ENCODE measurements at regions of chr20 and their contacts with region 1.

Region 1: DNA sequence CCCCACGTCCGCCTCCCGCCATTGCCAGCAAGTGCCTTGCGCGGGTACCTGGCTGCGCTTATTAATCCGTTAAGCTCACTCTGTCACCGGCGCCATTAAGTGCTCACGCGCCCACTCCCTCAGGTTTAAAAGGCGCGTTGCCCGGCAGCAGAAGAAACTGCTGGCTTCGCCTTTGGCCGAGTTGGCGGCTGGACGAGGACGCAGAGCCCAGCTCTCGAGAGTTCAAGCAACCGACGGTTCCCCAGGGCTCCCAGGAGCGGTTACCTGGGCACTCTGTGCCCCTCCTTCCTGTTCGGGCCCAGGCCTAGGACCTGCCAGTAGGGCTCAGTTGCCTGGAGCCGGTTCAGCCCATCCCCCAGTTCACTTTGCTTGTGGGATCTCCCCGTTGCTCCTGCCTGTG is at the start of gene GGTLC1:
- DNase-seq: no peak
- H3K4me3 ChIP-seq: no peak within 1 kb of the TSS
- H3K27ac ChIP-seq: no peak within 1 kb of the TSS
- H3K4me1 ChIP-seq: no peaks in the 10 kb centered on the region
- CTCF ChIP-seq: no peak
- total RNA-seq, gene GGTLC1: not detected in 2 replicates

Region 2: DNA sequence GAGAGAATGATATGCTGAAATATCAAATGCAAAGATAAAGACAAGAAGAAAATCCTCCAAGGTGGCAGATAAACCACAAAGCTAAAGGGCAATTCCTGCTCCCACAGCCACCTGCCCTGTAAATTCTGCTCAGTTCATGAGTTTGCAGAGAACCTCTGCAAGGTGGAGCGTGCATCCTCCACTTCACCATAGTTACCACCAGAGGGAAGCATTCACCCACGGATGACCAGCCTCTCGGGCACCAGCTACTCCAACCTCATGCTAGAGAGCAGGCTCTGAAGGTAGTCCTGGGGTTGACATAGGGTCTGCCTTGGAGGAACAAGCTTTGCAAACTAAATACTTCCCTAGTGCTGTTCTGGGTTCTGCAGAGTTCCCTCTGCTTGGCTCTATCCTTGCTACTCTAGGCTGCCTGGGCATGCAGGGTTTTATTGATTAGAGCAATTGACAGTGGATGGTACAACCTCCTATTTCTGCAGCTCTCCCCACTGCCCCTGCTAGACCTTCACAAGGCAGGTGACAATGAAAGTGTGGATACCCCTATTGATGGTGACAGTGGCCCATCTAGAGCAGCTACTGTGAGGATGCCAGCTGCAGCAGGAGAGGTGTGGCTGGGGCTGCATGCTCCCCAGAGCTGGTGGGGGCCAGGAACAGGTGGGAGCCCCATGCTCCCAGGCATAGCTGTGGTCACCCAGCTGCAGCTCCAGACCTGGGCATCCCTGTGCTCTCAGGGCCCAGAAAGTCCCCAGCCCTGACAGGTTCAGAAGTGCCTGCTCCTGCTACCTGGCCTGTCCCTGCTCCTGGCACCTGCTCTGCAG is 51.1 kb before region 1 on chr20:
- CTCF ChIA-PET with region 1: no interaction called
- POLR2A ChIA-PET with region 1: no interaction called
- intact Hi-C with region 1: loop called (anchors 2 kb)
- DNase-seq: peak; percentile 41
- H3K4me3 ChIP-seq: no peak overlapping the region
- H3K27ac ChIP-seq: no peak overlapping the region
- H3K4me1 ChIP-seq: no peaks in the 10 kb centered on the region
- CTCF ChIP-seq: peak; percentile 76

Measured in OCI-LY7 (cell line).